GM13976 (cell line): ENCODE measurements at regions of chr3 and their contacts with region 1.

Region 1: DNA sequence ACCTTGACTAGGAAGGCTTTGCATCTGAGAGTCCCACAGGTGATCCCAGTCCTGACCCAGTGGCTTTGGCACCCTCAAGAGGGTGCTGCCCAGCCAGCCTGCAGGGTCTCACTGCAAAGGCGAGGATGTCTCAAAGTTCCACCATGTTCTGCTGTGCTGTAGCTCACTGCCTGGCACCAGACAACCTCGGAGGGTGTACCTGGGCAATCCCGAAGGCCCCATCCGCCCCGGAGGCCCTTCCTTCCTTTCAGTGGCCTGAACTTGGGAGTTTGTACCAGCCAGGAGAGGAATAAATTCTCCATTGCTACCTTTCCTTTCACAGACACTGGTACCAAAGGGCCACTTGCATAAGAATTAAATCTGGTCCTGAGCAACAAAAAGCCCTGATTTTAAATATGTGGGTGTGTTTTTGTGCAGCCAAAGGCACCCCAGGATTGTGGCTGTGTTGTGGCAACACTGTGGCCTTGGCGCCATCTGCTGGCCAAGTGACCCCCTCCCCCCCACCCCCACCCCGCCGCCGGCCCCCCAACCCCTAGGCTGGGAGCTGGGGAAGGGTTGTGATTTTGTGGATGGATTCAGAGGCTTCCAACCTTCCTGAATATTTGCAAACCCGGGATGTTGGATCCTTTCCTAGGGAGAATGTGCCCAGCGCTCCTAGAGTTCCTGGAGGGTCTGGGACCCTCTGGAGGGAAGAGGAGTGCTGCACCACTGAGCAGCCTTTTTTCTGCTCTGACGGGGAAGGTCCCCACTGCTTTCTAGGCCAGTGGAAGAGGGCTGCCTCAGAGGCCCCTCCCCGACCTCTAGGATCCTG is 9.7 kb upstream of the PTPN23 start:
- DNase-seq: peak; percentile 84
- CTCF ChIP-seq: no peak

Region 2: DNA sequence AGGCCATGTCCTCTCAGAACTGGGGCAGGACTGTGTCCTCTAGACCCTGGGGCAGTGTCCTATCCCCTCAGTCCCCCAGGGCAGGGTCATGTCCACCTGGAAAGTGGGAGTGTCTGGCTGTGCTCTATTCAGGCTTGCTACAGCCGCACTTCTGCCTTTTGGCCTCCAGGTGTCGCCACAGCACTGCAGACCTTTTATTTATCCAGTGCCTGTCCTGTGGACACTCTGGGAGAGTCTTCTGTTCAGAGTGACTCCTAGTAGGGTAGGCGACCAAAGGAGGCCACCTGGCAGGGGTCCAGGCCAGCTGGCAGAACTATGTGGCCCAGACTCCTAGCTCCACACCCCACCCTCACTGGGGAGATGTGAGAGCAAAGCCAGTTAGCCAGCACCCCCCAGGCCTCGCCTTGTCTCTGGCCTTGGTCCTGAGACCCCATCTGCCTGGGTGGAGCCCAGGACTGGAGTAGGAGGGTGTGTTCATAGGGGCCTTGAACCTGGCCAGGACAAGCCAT is 666.0 kb before region 1 on chr3:
- in situ Hi-C with region 1: loop called (anchors 25 kb)
- DNase-seq: peak; percentile 86
- CTCF ChIP-seq: peak; percentile 96

Region 3: DNA sequence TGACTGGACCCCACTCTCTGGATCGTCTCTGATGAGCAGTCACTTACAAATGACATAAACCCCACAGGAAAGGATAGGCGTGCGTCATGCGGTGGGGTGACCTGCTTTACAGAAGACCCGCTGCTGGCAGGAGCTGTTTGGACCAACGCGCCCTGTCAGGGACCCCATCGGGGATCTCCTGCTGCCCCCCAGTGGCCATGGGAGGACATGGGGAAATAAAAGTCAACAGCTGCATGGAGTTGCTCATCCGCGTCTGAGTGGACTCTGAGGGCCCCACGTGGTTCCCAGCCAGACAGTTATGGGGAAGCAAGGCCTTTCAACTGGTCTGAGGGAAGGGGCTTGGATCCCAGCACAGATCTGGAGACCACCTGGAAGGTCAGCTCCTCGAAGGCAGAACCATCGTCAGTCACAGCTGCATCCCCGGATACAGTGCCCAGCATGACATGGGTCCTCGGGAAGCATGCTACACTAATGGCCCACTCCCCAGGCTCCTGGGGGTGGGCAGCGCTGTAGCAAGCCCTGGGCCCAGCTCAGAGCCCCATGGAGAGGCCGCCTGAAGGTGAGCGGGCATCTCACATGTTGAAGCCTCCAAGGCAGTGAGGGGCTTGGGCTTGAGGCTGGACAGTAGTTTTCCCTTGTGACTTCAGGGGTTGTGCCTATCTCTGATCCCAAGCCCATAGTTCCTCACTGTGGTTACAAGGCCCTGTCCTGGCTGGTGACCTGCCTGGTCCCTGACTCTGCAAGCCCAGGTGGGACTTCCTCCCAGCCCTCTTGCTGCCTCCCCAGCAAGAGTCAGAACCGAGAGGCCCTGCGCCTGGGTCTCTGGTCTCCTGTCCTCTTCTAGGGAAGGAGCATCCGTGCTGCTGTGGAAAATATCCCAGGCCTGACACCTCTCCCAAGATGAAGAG is 461.3 kb before region 1 on chr3:
- in situ Hi-C with region 1: loop called (anchors 25 kb)
- DNase-seq: peak; percentile 94
- CTCF ChIP-seq: peak; percentile 85

Region 4: GRCh38 chr3:47009225-47010110 is 361.6 kb before region 1 on chr3:
- in situ Hi-C with region 1: loop called (anchors 25 kb)
- DNase-seq: peak; percentile 98
- CTCF ChIP-seq: no peak